ENCODE measurements at regions of chr22 and their contacts with region 1.

Region 1: DNA sequence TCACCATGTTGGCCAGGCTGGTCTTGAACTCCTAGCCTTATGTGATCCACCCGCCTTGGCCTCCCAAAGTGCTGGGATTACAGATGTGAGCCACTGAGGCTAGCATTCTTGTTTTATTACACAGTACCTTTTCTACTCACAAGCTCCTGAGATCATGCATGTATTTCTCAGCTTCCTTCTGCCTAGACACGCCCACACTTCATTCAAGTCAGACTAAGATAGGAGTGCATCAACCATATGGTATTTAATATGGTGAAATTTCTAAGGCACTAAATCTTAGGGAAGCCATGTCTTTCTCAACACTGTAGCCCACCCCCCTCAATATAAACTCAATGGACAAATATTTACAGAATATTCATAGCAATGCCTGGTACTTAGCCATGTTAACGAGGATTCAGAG is 62.1 kb downstream of the SLC25A17 start:
- DNase-seq: no peak
- ATAC-seq: no peak
- H3K4me3 ChIP-seq: no peak overlapping the region
- H3K4me3 Mint-ChIP-seq: no peak overlapping the region
- H3K27ac ChIP-seq: no peak overlapping the region
- H3K27ac Mint-ChIP-seq: no peak overlapping the region
- H3K4me1 ChIP-seq: no peaks in the 10 kb centered on the region
- H3K4me1 Mint-ChIP-seq: no peaks in the 10 kb centered on the region
- H3K27me3 ChIP-seq: no peaks in the 10 kb centered on the region
- H3K27me3 Mint-ChIP-seq: no peaks in the 10 kb centered on the region
- CTCF ChIP-seq: no peak

Region 2: DNA sequence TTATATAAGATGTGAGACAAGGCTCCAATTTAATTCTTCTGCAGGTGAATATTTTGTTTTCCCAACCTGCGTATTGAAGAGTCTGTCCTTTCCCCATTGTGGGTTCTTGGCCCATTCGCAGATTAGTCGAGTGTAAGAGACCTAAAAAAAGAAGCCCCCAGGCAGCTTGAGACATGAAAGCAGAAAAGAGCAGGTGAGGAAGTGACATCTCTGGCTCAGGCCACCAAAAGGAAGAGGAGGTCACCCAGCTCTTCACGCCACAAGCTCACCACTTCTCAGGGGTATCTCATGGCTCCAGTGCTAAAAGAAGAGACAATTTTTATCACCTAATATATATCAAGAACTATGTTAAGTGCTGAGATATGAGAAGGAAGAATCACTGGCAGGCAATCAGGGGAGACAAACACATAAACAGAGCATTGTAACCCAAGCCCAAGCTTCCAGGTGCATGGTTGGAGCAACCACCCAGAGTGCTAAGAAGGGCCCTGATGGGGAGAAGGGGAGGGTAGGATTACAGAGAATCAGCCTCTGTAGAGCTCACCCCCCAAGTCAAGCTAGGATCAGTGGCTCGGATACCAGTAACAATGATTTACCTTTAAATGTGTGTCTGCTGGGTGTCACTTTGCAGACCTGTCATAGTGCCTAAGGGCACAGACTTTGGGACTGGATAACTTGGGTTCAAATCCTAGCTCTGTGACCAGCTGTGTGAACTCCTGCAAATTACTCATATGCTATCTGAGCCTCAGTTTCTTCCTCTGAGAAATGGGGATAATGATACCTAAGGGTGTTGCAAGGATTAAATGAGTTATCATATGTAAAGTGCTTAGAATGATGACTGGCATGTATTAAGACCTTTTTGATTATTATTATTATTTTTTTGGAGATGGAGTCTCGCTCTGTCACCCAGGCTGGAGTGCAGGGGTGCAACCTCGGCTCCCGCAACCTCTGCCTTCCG is 38.5 kb before region 1 on chr22:
- CTCF ChIA-PET with region 1: interaction called, 4 read pairs
- POLR2A ChIA-PET with region 1: no interaction called
- intact Hi-C with region 1: loop called in 1 of 2 experiments (anchors 5 kb)
- DNase-seq: no peak
- ATAC-seq: no peak
- H3K4me3 ChIP-seq: no peak overlapping the region
- H3K4me3 Mint-ChIP-seq: no peak overlapping the region
- H3K27ac ChIP-seq: no peak overlapping the region
- H3K27ac Mint-ChIP-seq: no peak overlapping the region
- H3K4me1 ChIP-seq: peaks cover 14% of the 10 kb centered on the region
- H3K4me1 Mint-ChIP-seq: peaks cover 23% of the 10 kb centered on the region
- H3K27me3 ChIP-seq: no peaks in the 10 kb centered on the region
- H3K27me3 Mint-ChIP-seq: no peaks in the 10 kb centered on the region
- CTCF ChIP-seq: no peak

Region 3: GRCh38 chr22:40739721-40740120 is 17.4 kb before region 1 on chr22:
- CTCF ChIA-PET with region 1: interaction called, 10 read pairs
- POLR2A ChIA-PET with region 1: interaction called, 3 read pairs
- intact Hi-C with region 1: no loop called
- DNase-seq: no peak
- ATAC-seq: no peak
- H3K4me3 ChIP-seq: no peak overlapping the region
- H3K4me3 Mint-ChIP-seq: no peak overlapping the region
- H3K27ac ChIP-seq: no peak overlapping the region
- H3K27ac Mint-ChIP-seq: no peak overlapping the region
- H3K4me1 ChIP-seq: no peaks in the 10 kb centered on the region
- H3K4me1 Mint-ChIP-seq: no peaks in the 10 kb centered on the region
- H3K27me3 ChIP-seq: no peaks in the 10 kb centered on the region
- H3K27me3 Mint-ChIP-seq: no peaks in the 10 kb centered on the region
- CTCF ChIP-seq: no peak